Breast epithelium (tissue), 4 donors: ENCODE measurements at regions of chr4 and their contacts with region 1.

Region 1: GRCh38 chr4:43126595-43126994 is 234.1 kb downstream of the GRXCR1 start:
- DNase-seq: no peak
- H3K4me3 ChIP-seq: no peak overlapping the region
- H3K27ac ChIP-seq: no peak overlapping the region
- H3K4me1 ChIP-seq: no peaks in the 10 kb centered on the region
- H3K27me3 ChIP-seq: no peaks in the 10 kb centered on the region
- CTCF ChIP-seq: no peak
- POLR2A ChIP-seq: no peak

Region 2: GRCh38 chr4:42172128-42172790 is 954.3 kb before region 1 on chr4:
- intact Hi-C with region 1: loop called (anchors 10 kb)
- DNase-seq: no peak
- H3K4me3 ChIP-seq: no peak overlapping the region
- H3K27ac ChIP-seq: no peak overlapping the region
- H3K4me1 ChIP-seq: no peaks in the 10 kb centered on the region
- H3K27me3 ChIP-seq: no peaks in the 10 kb centered on the region
- CTCF ChIP-seq: no peak
- POLR2A ChIP-seq: no peak

Region 3: DNA sequence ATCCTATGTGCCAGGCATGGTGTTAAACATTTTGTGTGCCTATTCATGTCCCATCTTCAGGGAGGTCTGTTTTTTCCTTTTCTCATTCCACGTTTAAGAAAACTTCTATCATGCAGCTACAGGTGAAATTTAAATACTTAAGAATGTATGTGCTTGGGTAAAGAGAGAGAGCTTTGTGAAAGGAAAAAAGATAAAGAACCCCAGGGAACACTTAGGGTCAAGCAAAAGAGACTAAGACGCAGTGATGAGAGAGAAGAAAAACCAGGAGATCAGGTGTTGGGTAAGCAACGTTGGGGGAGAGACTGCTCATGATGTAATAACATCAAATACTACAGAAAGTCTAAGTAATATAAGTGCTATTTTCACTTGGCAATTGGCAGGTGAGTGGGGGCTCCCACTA is 19.6 kb after region 1 on chr4:
- intact Hi-C with region 1: no loop called
- DNase-seq: no peak
- H3K4me3 ChIP-seq: no peak overlapping the region
- H3K27ac ChIP-seq: no peak overlapping the region
- H3K4me1 ChIP-seq: no peaks in the 10 kb centered on the region
- H3K27me3 ChIP-seq: no peaks in the 10 kb centered on the region
- CTCF ChIP-seq: no peak
- POLR2A ChIP-seq: no peak

Region 4: DNA sequence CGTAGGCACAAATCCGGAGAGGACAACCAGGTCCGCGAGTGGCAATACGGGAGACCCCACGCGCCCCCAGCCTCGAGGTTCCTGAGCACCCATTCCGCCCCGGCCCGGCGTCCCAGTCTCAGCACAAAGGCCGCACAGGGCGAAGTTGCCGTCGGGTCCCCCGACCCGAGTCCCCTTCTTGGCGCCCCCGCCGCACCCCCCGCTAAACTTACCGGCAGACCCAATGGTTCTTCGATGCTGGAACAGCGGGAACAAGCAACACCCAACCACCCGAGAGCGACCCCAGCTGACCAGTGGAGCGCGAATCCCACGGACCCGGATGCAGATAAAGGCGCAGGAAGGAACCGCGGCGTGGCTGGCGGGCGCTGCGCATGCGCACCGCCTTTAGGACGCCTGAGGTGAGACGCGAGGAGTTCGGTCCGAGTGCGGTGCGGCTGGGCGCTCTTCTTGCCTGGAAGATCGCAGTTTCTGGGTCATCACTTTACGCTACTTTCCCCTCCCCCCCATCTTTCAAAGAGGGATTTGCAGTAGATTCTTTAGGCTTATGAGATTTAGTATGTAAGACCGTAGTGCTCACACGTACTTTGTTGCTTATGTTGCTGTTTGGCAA is 1599.8 kb after region 1 on chr4 and contains the start of gene GNPDA2:
- intact Hi-C with region 1: no loop called
- DNase-seq: peak; percentile 70 to 80
- H3K4me3 ChIP-seq: peak within 1 kb of the TSS; percentile 79 to 86 (median 85)
- H3K27ac ChIP-seq: peak within 1 kb of the TSS; percentile 80 to 86
- H3K4me1 ChIP-seq: peaks cover 0 to 5% of the 10 kb centered on the region in 2 donors
- H3K27me3 ChIP-seq: no peaks in the 10 kb centered on the region
- CTCF ChIP-seq: no peak
- POLR2A ChIP-seq: no peak
- total RNA-seq, gene GNPDA2: 11.8 to 17.0 (median 17.0) TPM